Head of caudate nucleus (tissue), 42 donors: ENCODE measurements at regions of chr3 and their contacts with region 1.

Region 1: DNA sequence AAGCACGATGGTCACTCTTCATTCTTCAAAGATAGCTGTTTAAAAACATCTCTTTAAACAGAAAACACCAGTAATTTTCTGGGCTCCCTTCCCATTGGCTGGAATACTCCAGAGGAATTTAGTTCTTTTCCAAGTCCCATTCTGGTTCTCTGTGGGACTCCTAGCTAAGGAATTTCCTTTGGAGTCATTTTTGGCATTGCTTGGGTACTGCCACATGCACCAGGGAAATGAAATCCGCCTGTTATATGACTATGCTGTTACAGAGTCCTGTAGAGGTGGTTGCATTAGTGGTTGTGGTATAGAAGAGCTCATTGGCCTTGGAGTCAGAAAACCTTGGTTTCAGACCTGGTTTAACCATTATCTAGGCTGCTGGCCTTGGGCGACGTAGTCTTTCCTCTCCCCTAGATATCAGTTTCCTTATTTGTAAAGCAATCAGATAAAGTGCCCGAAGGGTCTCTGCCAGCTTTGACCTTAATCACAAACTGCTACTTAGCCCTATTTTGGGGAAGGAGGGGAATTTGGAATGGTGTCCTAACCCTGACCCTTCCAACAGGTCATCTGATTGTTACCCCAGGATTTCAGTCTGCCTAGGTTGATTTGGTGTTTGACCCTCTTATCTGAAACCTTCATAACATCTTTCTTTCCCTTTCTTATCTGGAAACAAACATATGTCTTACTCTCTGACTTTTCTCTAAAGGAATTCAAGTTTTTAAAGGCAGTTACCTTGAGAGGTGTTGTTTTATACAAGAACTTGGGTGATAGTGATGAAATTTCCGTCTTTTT is 13.4 kb downstream of the RTP1 start:
- DNase-seq: peak in 2 of 42 donors; percentile 17

Region 2: DNA sequence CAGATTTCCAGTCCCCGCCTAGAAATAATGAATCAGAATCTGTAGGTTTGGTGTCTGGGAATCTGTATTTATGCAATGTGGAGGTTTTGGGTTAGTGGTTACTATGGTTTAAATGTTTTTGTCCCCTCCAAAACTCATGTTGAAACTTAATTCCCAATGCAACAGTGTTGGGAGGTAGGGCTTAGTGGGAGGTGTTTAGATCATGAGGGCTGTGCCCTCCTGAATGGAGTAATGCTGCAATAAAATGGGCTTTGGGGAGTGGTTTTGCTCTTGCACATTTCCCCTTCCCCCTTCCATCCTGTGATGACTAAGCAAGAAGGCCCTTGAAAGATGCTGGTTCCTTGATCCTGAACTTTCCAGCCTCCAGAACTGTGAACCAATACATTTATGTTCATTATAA is 395.3 kb before region 1 on chr3:
- intact Hi-C with region 1: no loop called
- DNase-seq: no peak

Region 3: GRCh38 chr3:187197057-187197649 is 13.6 kb before region 1 on chr3 and contains the start of gene RTP1:
- intact Hi-C with region 1: no loop called
- DNase-seq: peak in 19 of 42 donors; percentile 14 to 59 (median 26)

Region 4: DNA sequence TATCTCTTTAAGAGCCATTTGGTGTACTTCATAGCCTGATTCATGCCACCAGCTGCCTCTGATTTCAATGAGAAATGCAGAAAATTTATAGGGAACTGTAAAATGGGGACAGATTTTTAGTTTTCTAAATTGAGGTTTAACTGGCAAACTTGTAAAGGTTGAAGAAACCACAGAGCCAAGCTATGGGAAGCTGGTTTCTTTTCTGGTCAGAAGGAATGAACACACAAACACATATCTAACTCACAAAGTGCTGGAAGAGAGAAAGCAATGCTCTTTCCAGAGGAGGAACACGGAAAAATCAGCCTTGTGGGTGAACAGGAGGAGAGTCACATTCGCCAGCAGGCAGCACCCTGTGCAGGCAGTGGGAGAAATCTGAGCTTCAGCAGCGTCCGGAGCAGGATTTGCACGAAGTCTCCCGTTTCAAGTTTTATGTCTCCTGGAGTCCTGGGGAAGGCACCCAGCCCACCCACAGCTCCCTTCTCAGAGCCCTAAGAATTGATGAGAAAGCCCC is 80.3 kb after region 1 on chr3:
- intact Hi-C with region 1: loop called (anchors 10 kb)
- DNase-seq: peak in 10 of 42 donors; percentile 5 to 48 (median 22)